ENCODE measurements at regions of chr20 and their contacts with region 1.

Region 1: DNA sequence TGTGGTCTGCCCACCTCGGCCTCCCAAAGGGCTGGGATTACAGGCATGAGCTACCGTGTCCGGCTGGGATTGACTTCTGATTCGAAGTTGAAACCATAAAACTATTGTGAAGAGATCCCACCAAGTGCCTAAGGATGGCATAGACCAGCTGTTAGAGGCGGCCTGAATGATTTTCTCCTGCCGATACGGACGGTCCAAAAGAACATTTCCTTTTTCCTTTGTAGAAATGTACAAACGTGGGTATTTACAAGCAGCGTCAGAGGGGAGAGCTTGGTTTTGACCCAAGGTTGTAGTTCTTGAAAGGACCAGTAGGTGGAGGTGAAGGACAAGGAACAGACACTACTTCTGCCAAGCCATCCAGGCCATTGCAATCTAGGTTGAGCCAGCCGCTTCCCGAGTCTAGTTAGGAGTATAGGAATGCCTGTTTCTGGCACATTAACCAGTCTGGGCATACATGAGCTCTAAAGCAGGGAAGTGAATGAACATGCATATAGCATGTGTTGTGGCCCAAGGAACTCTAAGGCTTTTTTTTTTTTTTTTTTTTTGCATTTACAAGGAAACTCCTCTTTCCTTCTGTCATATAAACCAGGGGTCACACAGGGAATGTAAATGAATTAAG is 29.1 kb downstream of the MOCS3 start:
- DNase-seq: peak; percentile 91
- H3K4me3 ChIP-seq: no peak overlapping the region
- H3K27ac ChIP-seq: no peak overlapping the region
- H3K4me1 ChIP-seq: no peaks in the 10 kb centered on the region
- H3K27me3 ChIP-seq: no peaks in the 10 kb centered on the region
- CTCF ChIP-seq: peak; percentile 86 to 95 (median 90)
- POLR2A ChIP-seq: no peak

Region 2: DNA sequence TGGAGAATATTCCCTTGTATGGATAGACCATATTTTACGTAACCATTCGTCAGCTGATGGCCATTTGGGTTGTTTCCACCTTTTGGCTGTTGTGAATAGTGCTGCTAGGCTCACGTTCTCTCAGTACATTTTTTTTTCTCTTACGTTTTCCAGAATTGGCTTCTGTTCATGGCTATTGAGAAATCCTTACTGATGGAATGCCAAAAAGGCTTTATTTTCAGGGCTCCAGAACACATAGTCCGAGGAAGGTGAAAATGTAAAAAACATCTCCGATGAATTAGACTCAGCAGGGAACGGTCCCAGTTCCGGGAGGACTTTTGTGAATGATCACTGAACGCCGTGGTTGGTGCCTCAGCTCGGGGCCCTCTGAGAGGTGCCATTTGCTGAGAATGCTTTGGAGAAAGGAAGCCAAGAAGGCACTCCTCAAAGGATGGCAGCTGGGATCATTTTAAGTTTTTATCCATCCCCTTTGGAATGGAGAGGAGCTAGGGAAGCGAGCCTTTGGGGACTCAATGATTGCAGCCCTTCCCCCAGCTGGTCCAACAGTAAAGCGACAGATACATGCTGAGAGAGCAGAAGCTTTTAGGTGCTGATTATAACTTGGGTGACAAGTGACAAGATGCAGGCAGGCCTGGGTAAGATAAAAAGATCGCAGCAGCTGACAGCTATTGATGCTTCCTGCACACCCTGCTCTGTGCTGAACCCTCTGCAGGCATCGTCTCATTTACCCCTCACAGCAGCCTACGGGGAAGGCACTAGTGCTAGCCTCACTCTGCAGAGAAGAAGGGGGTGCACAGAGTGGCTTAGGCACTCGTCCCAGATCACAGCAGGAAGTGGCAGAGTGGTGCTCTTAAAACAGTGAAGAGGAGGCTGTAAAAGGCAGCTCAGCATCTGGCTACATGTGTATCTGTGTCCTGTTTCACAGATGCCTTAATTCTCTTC is 168.6 kb after region 1 on chr20:
- intact Hi-C with region 1: no loop called
- DNase-seq: peak; percentile 69
- H3K4me3 ChIP-seq: no peak overlapping the region
- H3K27ac ChIP-seq: peak overlapping the region in 1 of 2 donors; percentile 35
- H3K4me1 ChIP-seq: no peaks in the 10 kb centered on the region
- H3K27me3 ChIP-seq: no peaks in the 10 kb centered on the region
- CTCF ChIP-seq: no peak
- POLR2A ChIP-seq: no peak

Region 3: DNA sequence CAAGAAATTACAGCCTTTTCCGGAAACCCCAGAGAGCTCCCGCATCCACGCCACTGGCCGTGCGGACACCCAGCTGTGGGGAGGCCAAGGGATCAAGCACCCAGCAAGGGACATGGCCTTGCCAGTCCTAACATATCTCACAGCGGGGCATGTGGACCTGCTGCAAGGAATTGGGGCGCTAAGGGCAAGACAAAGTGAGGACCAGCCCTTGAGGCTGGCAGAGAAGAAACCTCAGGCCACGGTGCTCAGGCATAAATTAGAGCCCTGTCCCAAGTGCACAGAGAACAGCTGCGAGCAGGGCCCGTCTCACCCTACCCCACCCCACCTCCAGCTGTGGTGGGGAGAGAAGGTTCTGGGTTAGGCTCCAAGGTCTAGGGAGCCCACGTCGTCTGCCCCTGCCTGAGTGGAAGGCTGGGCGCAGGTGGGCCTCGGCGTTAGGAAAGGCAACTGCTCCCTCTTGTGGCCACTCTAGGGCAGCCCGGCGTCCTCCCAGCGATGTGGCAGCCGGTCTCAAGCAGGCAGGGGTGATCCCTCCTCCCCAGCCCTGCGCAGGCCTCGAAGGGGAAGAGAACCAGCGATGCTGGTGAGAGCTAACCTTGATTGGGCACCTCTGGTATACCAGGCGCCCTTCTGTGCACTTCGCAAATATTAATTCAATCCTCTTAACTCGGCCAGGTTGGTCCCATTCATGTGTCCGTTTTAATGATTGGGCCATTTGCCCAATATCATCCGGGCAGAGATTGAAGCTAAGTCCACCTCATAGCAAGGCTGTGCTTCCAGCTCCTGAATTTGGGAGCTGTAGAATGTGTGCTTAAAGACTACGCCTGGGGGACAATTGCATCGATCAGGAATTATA is 319.0 kb after region 1 on chr20:
- intact Hi-C with region 1: loop called (anchors 5 kb)
- DNase-seq: peak; percentile 89
- H3K4me3 ChIP-seq: peak overlapping the region in 1 of 2 donors; percentile 4
- H3K27ac ChIP-seq: no peak overlapping the region
- H3K4me1 ChIP-seq: peaks cover 7% of the 10 kb centered on the region
- H3K27me3 ChIP-seq: no peaks in the 10 kb centered on the region
- CTCF ChIP-seq: peak; percentile 84 to 88 (median 87)
- POLR2A ChIP-seq: no peak

Measured in testis (tissue), 5 donors.